B cell (primary cell): ENCODE measurements at regions of chr3 and their contacts with region 1.

Region 1: GRCh38 chr3:30042274-30042859 is 564.0 kb upstream of the TGFBR2 start:
- DNase-seq: peak; percentile 65
- ATAC-seq: peak; percentile 33
- H3K4me3 ChIP-seq: no peak overlapping the region
- H3K4me3 Mint-ChIP-seq: no peak overlapping the region
- H3K27ac ChIP-seq: no peak overlapping the region
- H3K27ac Mint-ChIP-seq: no peak overlapping the region
- H3K4me1 ChIP-seq: no peaks in the 10 kb centered on the region
- H3K4me1 Mint-ChIP-seq: peaks cover 2% of the 10 kb centered on the region
- H3K27me3 ChIP-seq: no peaks in the 10 kb centered on the region
- H3K27me3 Mint-ChIP-seq: peaks cover 14% of the 10 kb centered on the region
- CTCF ChIP-seq: peak; percentile 85

Region 2: DNA sequence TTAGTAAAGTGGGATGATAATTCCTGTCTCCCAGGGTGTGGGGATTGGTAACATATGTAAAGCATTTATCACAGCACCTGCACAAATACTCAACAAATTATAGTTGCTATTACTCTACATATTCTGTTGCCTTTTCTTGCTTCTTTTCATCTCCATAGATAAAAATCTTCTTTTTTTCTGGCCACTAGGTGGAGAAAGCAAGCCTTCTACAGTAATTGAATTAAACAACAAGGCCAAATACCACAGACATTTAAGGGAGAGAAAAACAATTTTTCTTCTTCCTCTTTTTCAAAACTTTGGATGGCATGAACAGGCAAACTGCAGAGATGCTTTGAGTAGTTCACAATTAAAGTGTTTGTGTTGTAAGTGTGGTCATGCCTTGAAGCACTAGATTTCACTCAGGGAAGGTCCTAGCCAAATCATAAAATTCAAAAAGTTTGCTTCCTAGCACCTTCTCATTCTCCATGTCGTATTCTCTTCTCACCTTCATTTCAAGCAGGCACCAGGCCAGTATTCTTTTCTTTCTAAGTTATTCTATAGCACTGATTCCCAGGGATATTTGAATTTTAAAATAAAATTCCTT is 70.6 kb after region 1 on chr3:
- CTCF ChIA-PET with region 1: interaction called, 4 read pairs
- POLR2A ChIA-PET with region 1: no interaction called
- intact Hi-C with region 1: loop called (anchors 2 kb)
- DNase-seq: peak; percentile 58
- ATAC-seq: peak; percentile 41
- H3K4me3 ChIP-seq: no peak overlapping the region
- H3K4me3 Mint-ChIP-seq: no peak overlapping the region
- H3K27ac ChIP-seq: no peak overlapping the region
- H3K27ac Mint-ChIP-seq: no peak overlapping the region
- H3K4me1 ChIP-seq: no peaks in the 10 kb centered on the region
- H3K4me1 Mint-ChIP-seq: peaks cover 6% of the 10 kb centered on the region
- H3K27me3 ChIP-seq: no peaks in the 10 kb centered on the region
- H3K27me3 Mint-ChIP-seq: no peaks in the 10 kb centered on the region
- CTCF ChIP-seq: peak; percentile 73

Region 3: GRCh38 chr3:30315447-30315846 is 273.1 kb after region 1 on chr3:
- CTCF ChIA-PET with region 1: no interaction called
- POLR2A ChIA-PET with region 1: no interaction called
- intact Hi-C with region 1: no loop called
- DNase-seq: no peak
- ATAC-seq: no peak
- H3K4me3 ChIP-seq: no peak overlapping the region
- H3K4me3 Mint-ChIP-seq: no peak overlapping the region
- H3K27ac ChIP-seq: no peak overlapping the region
- H3K27ac Mint-ChIP-seq: no peak overlapping the region
- H3K4me1 ChIP-seq: peaks cover 5% of the 10 kb centered on the region in 2 donors
- H3K4me1 Mint-ChIP-seq: peaks cover 5% of the 10 kb centered on the region
- H3K27me3 ChIP-seq: no peaks in the 10 kb centered on the region
- H3K27me3 Mint-ChIP-seq: no peaks in the 10 kb centered on the region
- CTCF ChIP-seq: no peak

Region 4: GRCh38 chr3:30751610-30752299 is 709.4 kb after region 1 on chr3:
- CTCF ChIA-PET with region 1: interaction called, 20 read pairs
- POLR2A ChIA-PET with region 1: no interaction called
- intact Hi-C with region 1: loop called (anchors 1 kb)
- DNase-seq: peak; percentile 57
- ATAC-seq: peak; percentile 51
- H3K4me3 ChIP-seq: no peak overlapping the region
- H3K4me3 Mint-ChIP-seq: no peak overlapping the region
- H3K27ac ChIP-seq: no peak overlapping the region
- H3K27ac Mint-ChIP-seq: no peak overlapping the region
- H3K4me1 ChIP-seq: peaks cover 0 to 6% of the 10 kb centered on the region in 2 donors
- H3K4me1 Mint-ChIP-seq: peaks cover 6% of the 10 kb centered on the region
- H3K27me3 ChIP-seq: no peaks in the 10 kb centered on the region
- H3K27me3 Mint-ChIP-seq: no peaks in the 10 kb centered on the region
- CTCF ChIP-seq: peak; percentile 30

Region 5: DNA sequence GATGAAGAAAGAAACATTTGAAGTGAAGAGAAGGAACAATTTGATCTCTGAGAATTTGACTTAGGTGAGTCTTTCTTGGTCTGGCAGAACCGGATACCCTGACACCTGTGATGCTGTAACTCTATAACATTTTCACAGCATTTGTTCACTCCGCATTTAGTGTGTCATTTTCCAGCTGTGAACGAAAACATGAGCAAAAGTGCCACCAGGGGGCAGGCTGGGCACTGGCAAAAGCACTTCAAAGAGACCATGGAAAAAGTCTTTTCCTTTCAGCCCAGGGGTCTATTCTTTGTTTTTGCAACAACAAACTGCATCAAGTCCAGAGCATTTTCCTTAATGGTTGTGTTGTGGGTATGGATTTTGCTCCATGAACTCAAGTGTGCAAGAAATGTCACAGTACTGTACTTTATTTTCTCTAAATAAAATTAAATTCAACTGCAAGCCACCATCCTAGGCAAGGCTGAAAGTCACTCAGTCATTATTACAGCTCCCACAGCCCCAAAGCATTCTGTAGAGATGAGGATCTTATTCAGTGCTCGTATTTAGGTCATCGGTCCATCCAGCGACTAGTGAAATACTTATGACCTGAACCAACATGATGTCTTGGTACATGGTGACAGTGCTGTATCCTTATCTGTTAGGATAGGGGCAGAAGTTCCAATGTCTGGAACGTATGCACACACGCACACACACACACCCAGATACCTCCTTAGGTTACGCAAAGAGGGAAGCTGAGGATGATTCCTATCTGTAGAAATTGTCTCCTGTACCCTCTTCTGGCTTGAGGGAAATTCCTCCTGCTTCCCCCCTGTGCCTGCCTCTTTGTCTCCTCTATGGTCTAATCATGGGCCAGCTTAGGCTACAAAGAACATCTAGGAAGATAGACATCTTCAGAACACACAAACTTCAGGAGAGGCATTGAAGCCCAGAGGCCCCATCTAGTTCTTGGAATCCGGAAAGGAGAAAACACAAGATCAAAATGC is 726.6 kb after region 1 on chr3:
- CTCF ChIA-PET with region 1: interaction called, 9 read pairs
- POLR2A ChIA-PET with region 1: no interaction called
- intact Hi-C with region 1: loop called (anchors 5 kb)
- DNase-seq: peak; percentile 59
- ATAC-seq: peak; percentile 36
- H3K4me3 ChIP-seq: no peak overlapping the region
- H3K4me3 Mint-ChIP-seq: no peak overlapping the region
- H3K27ac ChIP-seq: no peak overlapping the region
- H3K27ac Mint-ChIP-seq: no peak overlapping the region
- H3K4me1 ChIP-seq: no peaks in the 10 kb centered on the region
- H3K4me1 Mint-ChIP-seq: no peaks in the 10 kb centered on the region
- H3K27me3 ChIP-seq: no peaks in the 10 kb centered on the region
- H3K27me3 Mint-ChIP-seq: peaks cover 17% of the 10 kb centered on the region
- CTCF ChIP-seq: peak; percentile 87

Region 6: GRCh38 chr3:31132132-31132769 is 1089.9 kb after region 1 on chr3:
- CTCF ChIA-PET with region 1: interaction called, 15 read pairs
- POLR2A ChIA-PET with region 1: no interaction called
- intact Hi-C with region 1: loop called (anchors 1 kb)
- DNase-seq: peak; percentile 48
- ATAC-seq: no peak
- H3K4me3 ChIP-seq: no peak overlapping the region
- H3K4me3 Mint-ChIP-seq: no peak overlapping the region
- H3K27ac ChIP-seq: no peak overlapping the region
- H3K27ac Mint-ChIP-seq: no peak overlapping the region
- H3K4me1 ChIP-seq: no peaks in the 10 kb centered on the region
- H3K4me1 Mint-ChIP-seq: no peaks in the 10 kb centered on the region
- H3K27me3 ChIP-seq: no peaks in the 10 kb centered on the region
- H3K27me3 Mint-ChIP-seq: peaks cover 11% of the 10 kb centered on the region
- CTCF ChIP-seq: peak; percentile 74